CD8-positive, alpha-beta T cell (primary cell): ENCODE measurements at regions of chrX and their contacts with region 1.

Region 1: DNA sequence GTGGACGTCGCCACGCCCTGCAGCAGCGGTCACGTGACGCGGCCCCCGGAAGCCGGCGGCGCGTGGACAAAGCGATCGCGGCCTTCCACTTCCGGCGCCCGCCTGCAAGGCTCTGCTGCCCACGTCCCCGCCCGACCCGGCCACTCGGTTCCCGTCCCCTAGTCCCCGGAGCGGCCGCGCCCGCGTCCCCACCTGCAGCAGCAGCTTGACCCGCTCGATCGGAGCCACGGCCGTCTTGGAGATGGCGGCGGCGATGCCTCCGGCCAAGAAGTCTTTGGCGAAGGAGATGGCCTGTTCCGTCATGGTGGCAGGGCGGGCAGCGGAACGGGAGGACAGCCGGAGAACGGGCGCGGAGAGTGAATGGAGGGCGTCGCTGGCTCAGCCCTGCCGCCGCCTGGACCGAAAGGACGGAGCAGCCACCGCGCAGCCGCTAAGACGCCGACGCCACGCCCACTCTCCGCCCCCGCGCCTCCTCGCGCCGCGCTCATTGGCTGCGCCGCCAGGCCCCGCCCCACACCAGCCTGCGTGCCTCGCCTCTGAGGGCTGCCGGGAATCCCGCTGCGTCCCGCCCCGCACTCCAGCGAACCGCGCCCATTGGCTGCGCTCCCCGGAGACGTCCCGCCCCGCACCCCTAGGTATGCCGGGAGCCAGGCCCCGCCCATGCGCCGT is at the start of gene SLC25A6:
- DNase-seq: peak; percentile 99 to 100 (median 99)
- ATAC-seq: peak; percentile 95
- H3K4me3 ChIP-seq: peak within 1 kb of the TSS; percentile 99
- H3K4me3 Mint-ChIP-seq: peak within 1 kb of the TSS; percentile 90
- H3K27ac ChIP-seq: peak within 1 kb of the TSS; percentile 96 to 98
- H3K27ac Mint-ChIP-seq: peak within 1 kb of the TSS; percentile 92
- H3K4me1 ChIP-seq: peaks cover 44% of the 10 kb centered on the region
- H3K4me1 Mint-ChIP-seq: peaks cover 47% of the 10 kb centered on the region
- H3K27me3 ChIP-seq: no peaks in the 10 kb centered on the region
- H3K27me3 Mint-ChIP-seq: no peaks in the 10 kb centered on the region
- CTCF ChIP-seq: no peak
- total RNA-seq, gene SLC25A6: 382 to 404 TPM

Region 2: DNA sequence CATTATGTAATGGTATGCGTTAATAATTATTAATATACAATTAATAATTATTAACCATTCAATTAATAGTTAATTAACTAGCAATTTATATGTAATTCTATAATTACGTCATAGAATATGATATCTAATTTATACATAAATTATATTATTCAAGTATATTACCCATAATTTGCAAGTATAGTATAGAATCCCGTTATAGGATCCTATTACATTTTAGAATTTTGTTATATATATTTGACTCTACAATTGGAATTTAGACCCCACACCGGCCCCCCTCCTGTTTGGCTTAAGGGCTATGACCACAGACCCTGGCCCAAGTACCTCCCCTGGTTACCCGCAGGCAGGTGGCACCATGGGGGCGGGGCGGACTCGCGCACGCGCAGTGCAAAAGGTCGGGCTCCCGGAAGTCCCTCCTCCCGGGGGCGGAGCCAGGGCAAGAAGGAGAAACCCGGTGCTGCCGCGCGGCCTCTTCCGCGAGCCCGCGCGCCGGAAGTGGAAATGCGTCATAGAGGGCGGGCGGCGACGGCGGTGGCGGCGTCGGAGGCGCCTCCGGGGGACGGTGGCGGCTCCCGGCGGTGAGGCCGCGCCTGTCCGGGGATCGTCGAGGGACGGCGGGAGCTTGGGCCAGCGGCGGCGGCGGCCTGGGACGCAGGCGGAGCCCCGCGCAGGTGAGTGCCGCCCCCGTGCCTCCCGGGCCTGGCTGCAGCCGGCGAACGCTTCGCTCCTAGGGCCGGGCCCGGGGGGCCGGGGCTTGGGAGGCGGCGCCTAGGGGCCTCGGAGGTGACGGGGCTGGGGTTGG is 199.5 kb after region 1 on chrX and contains the start of gene AKAP17A:
- CTCF ChIA-PET with region 1: no interaction called
- POLR2A ChIA-PET with region 1: no interaction called
- intact Hi-C with region 1: loop called (anchors 1 kb)
- DNase-seq: peak; percentile 95 to 100 (median 98)
- ATAC-seq: peak; percentile 88
- H3K4me3 ChIP-seq: peak within 1 kb of the TSS; percentile 82 to 85
- H3K4me3 Mint-ChIP-seq: peak within 1 kb of the TSS; percentile 90
- H3K27ac ChIP-seq: peak within 1 kb of the TSS; percentile 71 to 79
- H3K27ac Mint-ChIP-seq: peak within 1 kb of the TSS; percentile 91
- H3K4me1 ChIP-seq: peaks cover 35% of the 10 kb centered on the region
- H3K4me1 Mint-ChIP-seq: peaks cover 39% of the 10 kb centered on the region
- H3K27me3 ChIP-seq: no peaks in the 10 kb centered on the region
- H3K27me3 Mint-ChIP-seq: no peaks in the 10 kb centered on the region
- CTCF ChIP-seq: no peak
- total RNA-seq, gene AKAP17A: 193 to 209 TPM

Region 3: GRCh38 chrX:2500267-2501075 is 1108.6 kb after region 1 on chrX and contains the starts of genes DHRSX and ZBED1:
- CTCF ChIA-PET with region 1: no interaction called
- POLR2A ChIA-PET with region 1: no interaction called
- intact Hi-C with region 1: loop called in 1 of 2 experiments (anchors 5 kb)
- DNase-seq: peak in 8 of 9 experiments; percentile 29 to 72 (median 48)
- ATAC-seq: peak; percentile 64
- H3K4me3 ChIP-seq: peak within 1 kb of the TSS; percentile 66 to 67
- H3K4me3 Mint-ChIP-seq: peak within 1 kb of the TSS; percentile 88
- H3K27ac ChIP-seq: peak within 1 kb of the TSS; percentile 68 to 76
- H3K27ac Mint-ChIP-seq: peak within 1 kb of the TSS; percentile 93
- H3K4me1 ChIP-seq: peaks cover 12% of the 10 kb centered on the region
- H3K4me1 Mint-ChIP-seq: peaks cover 35% of the 10 kb centered on the region
- H3K27me3 ChIP-seq: no peaks in the 10 kb centered on the region
- H3K27me3 Mint-ChIP-seq: no peaks in the 10 kb centered on the region
- CTCF ChIP-seq: no peak
- total RNA-seq, gene DHRSX: 9.9 to 10.8 TPM
- total RNA-seq, gene ZBED1: 13.4 to 14.8 TPM

Region 4: GRCh38 chrX:2627272-2627867 is 1235.5 kb after region 1 on chrX:
- CTCF ChIA-PET with region 1: no interaction called
- POLR2A ChIA-PET with region 1: no interaction called
- intact Hi-C with region 1: loop called in 1 of 2 experiments (anchors 5 kb)
- DNase-seq: peak in 6 of 9 experiments; percentile 39 to 69 (median 50)
- ATAC-seq: peak; percentile 33
- H3K4me3 ChIP-seq: no peak overlapping the region
- H3K4me3 Mint-ChIP-seq: no peak overlapping the region
- H3K27ac ChIP-seq: no peak overlapping the region
- H3K27ac Mint-ChIP-seq: peak overlapping the region; percentile 58
- H3K4me1 ChIP-seq: peaks cover 16% of the 10 kb centered on the region
- H3K4me1 Mint-ChIP-seq: peaks cover 48% of the 10 kb centered on the region
- H3K27me3 ChIP-seq: no peaks in the 10 kb centered on the region
- H3K27me3 Mint-ChIP-seq: no peaks in the 10 kb centered on the region
- CTCF ChIP-seq: peak; percentile 43

Region 5: GRCh38 chrX:2696698-2697215 is 1304.9 kb after region 1 on chrX:
- CTCF ChIA-PET with region 1: no interaction called
- POLR2A ChIA-PET with region 1: no interaction called
- intact Hi-C with region 1: loop called (anchors 1 to 5 kb)
- DNase-seq: peak in 8 of 9 experiments; percentile 30 to 90 (median 58)
- ATAC-seq: peak; percentile 81
- H3K4me3 ChIP-seq: peak overlapping the region; percentile 19 to 23
- H3K4me3 Mint-ChIP-seq: peak overlapping the region; percentile 66
- H3K27ac ChIP-seq: peak overlapping the region in 1 of 2 experiments; percentile 71
- H3K27ac Mint-ChIP-seq: peak overlapping the region; percentile 79
- H3K4me1 ChIP-seq: peaks cover 84% of the 10 kb centered on the region
- H3K4me1 Mint-ChIP-seq: peaks cover 93% of the 10 kb centered on the region
- H3K27me3 ChIP-seq: no peaks in the 10 kb centered on the region
- H3K27me3 Mint-ChIP-seq: peaks cover 2% of the 10 kb centered on the region
- CTCF ChIP-seq: no peak